MCF 10A (cell line): ENCODE measurements at regions of chr14 and their contacts with region 1.

Region 1: GRCh38 chr14:31229638-31230229 is 22.1 kb upstream of the HECTD1 start:
- DNase-seq: peak; percentile 100
- H3K4me3 Mint-ChIP-seq: peak overlapping the region; percentile 59
- H3K27ac Mint-ChIP-seq: peak overlapping the region; percentile 89
- H3K4me1 Mint-ChIP-seq: peaks cover 17% of the 10 kb centered on the region
- H3K27me3 Mint-ChIP-seq: no peaks in the 10 kb centered on the region
- CTCF ChIP-seq: no peak

Region 2: GRCh38 chr14:30129807-30130206 is 1099.9 kb before region 1 on chr14:
- CTCF ChIA-PET with region 1: no interaction called
- POLR2A ChIA-PET with region 1: no interaction called
- intact Hi-C with region 1: no loop called
- DNase-seq: no peak
- H3K4me3 Mint-ChIP-seq: no peak overlapping the region
- H3K27ac Mint-ChIP-seq: no peak overlapping the region
- H3K4me1 Mint-ChIP-seq: no peaks in the 10 kb centered on the region
- H3K27me3 Mint-ChIP-seq: no peaks in the 10 kb centered on the region
- CTCF ChIP-seq: no peak

Region 3: DNA sequence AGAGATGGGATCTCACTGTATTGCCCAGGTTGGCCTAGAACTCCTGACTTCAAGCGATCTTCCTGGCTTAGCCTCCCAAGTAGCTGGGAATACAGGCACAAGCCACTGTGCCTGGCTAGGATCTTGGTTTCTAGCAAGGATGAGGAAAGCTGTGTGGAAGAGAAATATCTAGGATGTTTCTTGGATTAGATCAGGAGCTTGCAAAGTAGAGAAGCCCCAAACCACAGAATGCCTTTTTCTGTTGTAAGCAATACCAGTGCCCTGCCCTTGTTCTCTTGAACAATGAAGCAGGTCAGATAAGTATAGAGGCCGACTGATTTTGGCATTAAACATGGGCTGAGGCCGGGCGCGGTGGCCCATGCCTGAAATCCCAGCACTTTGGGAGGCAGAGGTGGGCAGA is 159.3 kb before region 1 on chr14:
- CTCF ChIA-PET with region 1: no interaction called
- POLR2A ChIA-PET with region 1: no interaction called
- intact Hi-C with region 1: no loop called
- DNase-seq: no peak
- H3K4me3 Mint-ChIP-seq: no peak overlapping the region
- H3K27ac Mint-ChIP-seq: no peak overlapping the region
- H3K4me1 Mint-ChIP-seq: no peaks in the 10 kb centered on the region
- H3K27me3 Mint-ChIP-seq: no peaks in the 10 kb centered on the region
- CTCF ChIP-seq: no peak

Region 4: DNA sequence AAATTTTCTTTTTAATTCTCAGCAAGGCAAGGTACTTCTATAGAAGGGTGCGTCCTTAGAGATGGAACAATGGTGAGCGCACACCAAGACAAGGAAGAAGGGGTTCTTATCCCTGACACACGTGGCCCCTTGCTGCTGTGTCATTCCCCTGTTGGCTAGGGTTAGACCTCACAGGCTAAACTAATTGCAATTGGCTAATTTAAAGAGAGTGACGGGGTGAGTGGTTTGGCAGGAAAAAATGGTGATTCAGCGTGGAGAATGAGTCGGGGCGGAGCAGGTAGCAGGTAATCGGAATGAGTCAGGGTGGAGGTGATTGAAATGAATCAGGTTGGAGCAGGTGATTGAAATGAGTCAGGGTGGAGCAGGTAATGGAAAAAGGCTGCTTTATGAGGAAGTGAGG is 14.1 kb after region 1 on chr14:
- CTCF ChIA-PET with region 1: interaction called, 6 read pairs
- POLR2A ChIA-PET with region 1: interaction called, 20 read pairs
- intact Hi-C with region 1: no loop called
- DNase-seq: peak; percentile 93
- H3K4me3 Mint-ChIP-seq: peak overlapping the region; percentile 5
- H3K27ac Mint-ChIP-seq: peak overlapping the region; percentile 7
- H3K4me1 Mint-ChIP-seq: peaks cover 20% of the 10 kb centered on the region
- H3K27me3 Mint-ChIP-seq: no peaks in the 10 kb centered on the region
- CTCF ChIP-seq: no peak

Region 5: DNA sequence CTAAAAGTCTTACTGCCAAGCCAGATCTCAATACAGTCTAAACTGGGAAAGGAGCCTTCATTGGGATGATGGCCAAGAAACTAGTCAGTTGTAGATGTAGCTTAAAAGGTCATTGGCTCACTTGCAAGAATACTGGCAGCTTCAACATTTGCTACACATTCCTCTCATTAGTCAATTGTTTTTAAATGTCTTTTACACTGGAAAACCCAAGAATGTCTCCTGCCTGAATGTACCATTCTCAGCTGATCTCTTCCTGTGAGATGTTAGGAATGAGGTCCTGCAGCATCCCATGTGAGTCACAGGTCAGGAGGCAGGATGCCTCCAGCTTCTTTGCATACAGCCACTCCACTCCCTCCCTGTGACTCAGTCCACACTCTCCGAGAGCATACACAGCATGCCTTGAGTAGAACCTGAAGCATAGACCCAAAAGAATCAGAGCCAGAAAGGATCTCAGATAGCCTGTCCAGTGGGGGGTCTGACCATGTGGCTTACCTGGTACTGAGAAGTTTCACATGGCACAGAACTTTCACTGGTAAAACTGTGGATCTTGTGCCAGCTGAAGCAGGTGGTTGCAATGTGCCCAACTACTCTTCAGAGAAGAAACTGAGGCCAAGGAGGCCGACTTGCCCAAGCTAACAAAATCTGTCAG is 33.9 kb after region 1 on chr14:
- CTCF ChIA-PET with region 1: interaction called, 3 read pairs
- POLR2A ChIA-PET with region 1: interaction called, 35 read pairs
- intact Hi-C with region 1: loop called (anchors 2 kb)
- DNase-seq: peak; percentile 86
- H3K4me3 Mint-ChIP-seq: no peak overlapping the region
- H3K27ac Mint-ChIP-seq: peak overlapping the region; percentile 31
- H3K4me1 Mint-ChIP-seq: peaks cover 18% of the 10 kb centered on the region
- H3K27me3 Mint-ChIP-seq: no peaks in the 10 kb centered on the region
- CTCF ChIP-seq: no peak

Region 6: GRCh38 chr14:31336652-31337051 is 106.9 kb after region 1 on chr14:
- CTCF ChIA-PET with region 1: no interaction called
- POLR2A ChIA-PET with region 1: interaction called, 3 read pairs
- intact Hi-C with region 1: loop called (anchors 2 kb)
- DNase-seq: peak; percentile 88
- H3K4me3 Mint-ChIP-seq: no peak overlapping the region
- H3K27ac Mint-ChIP-seq: peak overlapping the region; percentile 27
- H3K4me1 Mint-ChIP-seq: peaks cover 6% of the 10 kb centered on the region
- H3K27me3 Mint-ChIP-seq: no peaks in the 10 kb centered on the region
- CTCF ChIP-seq: no peak